ENCODE measurements at regions of chr3 and their contacts with region 1.

Region 1: DNA sequence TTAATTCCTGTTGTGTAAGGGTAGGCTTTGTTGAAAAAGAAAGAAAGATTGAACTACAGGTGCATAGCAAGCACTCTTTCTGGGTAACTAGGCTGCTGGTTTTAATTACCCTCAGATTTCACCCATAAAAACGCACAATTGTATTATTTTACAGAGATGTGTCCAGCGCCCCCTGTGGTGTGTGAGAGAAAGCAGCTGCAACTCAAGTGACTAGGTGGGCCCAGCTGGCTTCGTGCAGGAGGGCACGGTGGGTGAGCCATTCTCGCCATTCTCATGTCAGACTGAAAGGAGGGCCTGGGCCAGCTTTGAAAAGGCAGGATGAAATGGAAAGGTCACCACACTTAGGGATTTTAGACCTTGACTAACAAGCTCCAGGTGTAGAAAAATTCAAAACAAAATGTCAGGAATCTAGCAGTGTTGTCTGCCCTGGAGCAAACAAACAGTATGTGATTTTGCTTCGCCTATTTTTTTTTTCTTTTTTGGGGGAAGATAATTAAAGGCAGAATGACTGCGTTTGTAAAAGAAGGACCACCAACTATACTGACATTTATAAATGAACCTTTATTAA is 122.5 kb downstream of the LRIG1 start:
- DNase-seq: peak; percentile 49 to 70 (median 56)
- H3K4me3 ChIP-seq: no peak overlapping the region
- H3K4me3 Mint-ChIP-seq: peak overlapping the region in 2 of 8 donors; percentile 12 to 32
- H3K27ac ChIP-seq: peak overlapping the region; percentile 45
- H3K27ac Mint-ChIP-seq: peak overlapping the region; percentile 82 to 95 (median 89)
- H3K4me1 ChIP-seq: peaks cover 25% of the 10 kb centered on the region
- H3K4me1 Mint-ChIP-seq: peaks cover 19 to 37% (median 22%) of the 10 kb centered on the region in 4 donors
- H3K27me3 ChIP-seq: no peaks in the 10 kb centered on the region
- H3K27me3 Mint-ChIP-seq: no peaks in the 10 kb centered on the region

Region 2: GRCh38 chr3:65848024-65848423 is 530.3 kb before region 1 on chr3:
- CTCF ChIA-PET with region 1: no interaction called
- POLR2A ChIA-PET with region 1: no interaction called
- intact Hi-C with region 1: no loop called
- DNase-seq: no peak
- H3K4me3 ChIP-seq: no peak overlapping the region
- H3K4me3 Mint-ChIP-seq: no peak overlapping the region
- H3K27ac ChIP-seq: no peak overlapping the region
- H3K27ac Mint-ChIP-seq: no peak overlapping the region
- H3K4me1 ChIP-seq: no peaks in the 10 kb centered on the region
- H3K4me1 Mint-ChIP-seq: no peaks in the 10 kb centered on the region
- H3K27me3 ChIP-seq: no peaks in the 10 kb centered on the region
- H3K27me3 Mint-ChIP-seq: no peaks in the 10 kb centered on the region

Region 3: DNA sequence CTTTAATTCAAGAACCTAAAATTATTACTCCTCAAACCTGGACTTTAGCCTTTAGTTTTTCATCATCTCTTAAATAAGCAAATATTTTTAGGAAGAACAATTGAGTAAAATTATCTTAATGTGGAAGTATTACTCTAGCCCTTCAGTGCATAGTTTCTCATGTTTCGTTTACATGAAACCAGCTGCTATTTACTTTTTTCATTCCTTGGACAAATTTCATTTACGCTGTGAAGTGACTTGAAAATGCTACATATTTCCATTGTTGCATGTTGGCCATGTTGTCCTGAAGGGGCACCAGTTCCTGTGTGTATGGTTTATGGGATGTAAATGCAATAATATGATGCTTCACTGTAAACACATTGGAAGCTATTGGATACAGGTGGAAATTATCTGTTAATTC is 107.6 kb before region 1 on chr3:
- CTCF ChIA-PET with region 1: interaction called, 28 read pairs
- POLR2A ChIA-PET with region 1: no interaction called
- intact Hi-C with region 1: no loop called
- DNase-seq: no peak
- H3K4me3 ChIP-seq: no peak overlapping the region
- H3K4me3 Mint-ChIP-seq: no peak overlapping the region
- H3K27ac ChIP-seq: no peak overlapping the region
- H3K27ac Mint-ChIP-seq: no peak overlapping the region
- H3K4me1 ChIP-seq: no peaks in the 10 kb centered on the region
- H3K4me1 Mint-ChIP-seq: peaks cover 3 to 8% (median 4%) of the 10 kb centered on the region in 4 donors
- H3K27me3 ChIP-seq: no peaks in the 10 kb centered on the region
- H3K27me3 Mint-ChIP-seq: no peaks in the 10 kb centered on the region

Region 4: GRCh38 chr3:66302288-66302687 is 76.1 kb before region 1 on chr3:
- CTCF ChIA-PET with region 1: interaction called, 32 read pairs
- POLR2A ChIA-PET with region 1: interaction called, 38 read pairs
- intact Hi-C with region 1: loop called (anchors 1 kb)
- DNase-seq: peak; percentile 81 to 88 (median 83)
- H3K4me3 ChIP-seq: no peak overlapping the region
- H3K4me3 Mint-ChIP-seq: peak overlapping the region in 7 of 8 donors; percentile 11 to 79 (median 68)
- H3K27ac ChIP-seq: peak overlapping the region; percentile 73
- H3K27ac Mint-ChIP-seq: peak overlapping the region in 3 of 7 donors; percentile 97 to 99 (median 98)
- H3K4me1 ChIP-seq: peaks cover 93% of the 10 kb centered on the region
- H3K4me1 Mint-ChIP-seq: peaks cover 22 to 71% (median 43%) of the 10 kb centered on the region in 4 donors
- H3K27me3 ChIP-seq: no peaks in the 10 kb centered on the region
- H3K27me3 Mint-ChIP-seq: no peaks in the 10 kb centered on the region

Region 5: GRCh38 chr3:66355394-66355793 is 22.9 kb before region 1 on chr3:
- CTCF ChIA-PET with region 1: interaction called, 26 read pairs
- POLR2A ChIA-PET with region 1: interaction called, 5 read pairs
- intact Hi-C with region 1: no loop called
- DNase-seq: no peak
- H3K4me3 ChIP-seq: no peak overlapping the region
- H3K4me3 Mint-ChIP-seq: no peak overlapping the region
- H3K27ac ChIP-seq: no peak overlapping the region
- H3K27ac Mint-ChIP-seq: no peak overlapping the region
- H3K4me1 ChIP-seq: peaks cover 22% of the 10 kb centered on the region
- H3K4me1 Mint-ChIP-seq: peaks cover 0 to 17% (median 13%) of the 10 kb centered on the region in 4 donors
- H3K27me3 ChIP-seq: no peaks in the 10 kb centered on the region
- H3K27me3 Mint-ChIP-seq: no peaks in the 10 kb centered on the region

Region 6: DNA sequence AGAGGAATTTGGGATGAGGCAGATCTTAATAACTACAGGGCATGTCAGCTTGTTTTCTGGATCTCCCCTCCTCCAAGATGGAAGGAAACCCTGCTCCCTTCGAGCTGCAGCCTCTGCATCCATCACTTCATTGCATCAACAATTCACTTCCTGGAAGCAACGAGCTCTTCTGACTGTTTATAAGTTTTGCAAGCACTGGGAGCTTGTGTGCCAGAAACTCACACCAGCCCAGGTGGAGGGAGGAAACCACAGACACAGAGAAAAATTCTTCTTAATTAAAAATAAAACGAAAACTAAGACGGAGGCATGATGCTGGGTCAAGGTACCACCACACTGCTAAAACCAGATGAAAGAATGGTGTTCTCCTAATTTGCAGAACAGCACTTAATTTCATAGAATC is 111.9 kb after region 1 on chr3:
- CTCF ChIA-PET with region 1: interaction called, 13 read pairs
- POLR2A ChIA-PET with region 1: interaction called, 9 read pairs
- intact Hi-C with region 1: no loop called
- DNase-seq: peak in 1 of 5 donors; percentile 37
- H3K4me3 ChIP-seq: peak overlapping the region; percentile 18 to 30
- H3K4me3 Mint-ChIP-seq: peak overlapping the region; percentile 74 to 93 (median 82)
- H3K27ac ChIP-seq: peak overlapping the region; percentile 31
- H3K27ac Mint-ChIP-seq: peak overlapping the region; percentile 30 to 91 (median 61)
- H3K4me1 ChIP-seq: peaks cover 100% of the 10 kb centered on the region
- H3K4me1 Mint-ChIP-seq: peaks cover 71 to 98% (median 86%) of the 10 kb centered on the region in 4 donors
- H3K27me3 ChIP-seq: no peaks in the 10 kb centered on the region
- H3K27me3 Mint-ChIP-seq: no peaks in the 10 kb centered on the region

Region 7: DNA sequence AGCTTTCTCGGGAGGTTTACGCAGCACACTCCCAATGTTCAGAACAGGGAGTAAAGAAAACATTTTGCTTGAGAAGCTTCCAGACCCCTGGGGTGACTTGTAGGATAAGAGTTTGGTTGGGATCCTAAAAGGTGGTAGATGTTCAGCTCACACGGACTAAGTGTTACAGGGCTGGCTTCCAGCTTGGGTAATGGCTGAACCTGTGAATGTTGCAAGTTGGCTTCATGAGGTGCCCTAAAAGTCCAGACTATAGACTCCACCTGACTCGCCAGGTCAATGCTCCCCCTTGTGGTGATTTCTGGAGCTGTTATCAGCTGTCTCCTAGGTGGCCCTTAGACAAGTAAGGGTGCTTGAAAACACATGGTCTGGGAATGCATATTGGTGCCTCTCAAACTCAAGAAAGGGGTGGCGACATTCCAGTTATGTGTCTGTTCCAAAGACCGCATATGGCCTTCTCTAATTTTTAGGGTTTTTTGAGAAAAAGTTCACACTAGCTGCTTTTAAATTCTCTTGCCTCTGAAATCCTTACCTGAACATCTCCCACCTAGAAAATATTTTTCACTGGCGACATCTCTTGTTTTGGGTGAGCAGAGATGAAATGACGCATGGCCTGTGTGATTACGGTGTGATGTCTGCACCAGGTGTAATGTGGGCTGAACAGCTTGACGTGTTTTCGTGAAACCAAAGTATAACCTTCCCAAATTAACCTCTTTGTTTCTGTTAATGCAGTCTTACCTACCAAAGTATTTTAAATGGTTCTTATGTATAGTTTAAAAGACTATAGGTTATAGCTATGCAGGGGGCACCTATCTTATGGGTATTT is 444.1 kb after region 1 on chr3:
- CTCF ChIA-PET with region 1: interaction called, 35 read pairs
- POLR2A ChIA-PET with region 1: no interaction called
- intact Hi-C with region 1: no loop called
- DNase-seq: peak; percentile 60 to 73 (median 64)
- H3K4me3 ChIP-seq: no peak overlapping the region
- H3K4me3 Mint-ChIP-seq: no peak overlapping the region
- H3K27ac ChIP-seq: no peak overlapping the region
- H3K27ac Mint-ChIP-seq: no peak overlapping the region
- H3K4me1 ChIP-seq: no peaks in the 10 kb centered on the region
- H3K4me1 Mint-ChIP-seq: peaks cover 0 to 2% (median 0%) of the 10 kb centered on the region in 4 donors
- H3K27me3 ChIP-seq: no peaks in the 10 kb centered on the region
- H3K27me3 Mint-ChIP-seq: peaks cover 0 to 4% of the 10 kb centered on the region in 2 donors